K562 (cell line): ENCODE measurements at regions of chr2 and their contacts with region 1.

Region 1: GRCh38 chr2:62456721-62457539 is 49.1 kb downstream of the TMEM17 start:
- DNase-seq: peak; percentile 68 to 87 (median 84)
- ATAC-seq: peak; percentile 98
- H3K4me3 ChIP-seq: peak overlapping the region; percentile 46
- H3K27ac ChIP-seq: no peak overlapping the region
- H3K4me1 ChIP-seq: peaks cover 4 to 12% of the 10 kb centered on the region in 2 experiments; a peak in 3 of 5 replicates
- H3K27me3 ChIP-seq: peaks cover 0 to 10% of the 10 kb centered on the region in 2 experiments; a peak in 3 of 5 replicates
- CTCF ChIP-seq: peak; percentile 87 to 93 (median 88)
- EP300 ChIP-seq: no peak
- POLR2A ChIP-seq: no peak
- RAD21 ChIP-seq: peak; percentile 98 to 100

Region 2: DNA sequence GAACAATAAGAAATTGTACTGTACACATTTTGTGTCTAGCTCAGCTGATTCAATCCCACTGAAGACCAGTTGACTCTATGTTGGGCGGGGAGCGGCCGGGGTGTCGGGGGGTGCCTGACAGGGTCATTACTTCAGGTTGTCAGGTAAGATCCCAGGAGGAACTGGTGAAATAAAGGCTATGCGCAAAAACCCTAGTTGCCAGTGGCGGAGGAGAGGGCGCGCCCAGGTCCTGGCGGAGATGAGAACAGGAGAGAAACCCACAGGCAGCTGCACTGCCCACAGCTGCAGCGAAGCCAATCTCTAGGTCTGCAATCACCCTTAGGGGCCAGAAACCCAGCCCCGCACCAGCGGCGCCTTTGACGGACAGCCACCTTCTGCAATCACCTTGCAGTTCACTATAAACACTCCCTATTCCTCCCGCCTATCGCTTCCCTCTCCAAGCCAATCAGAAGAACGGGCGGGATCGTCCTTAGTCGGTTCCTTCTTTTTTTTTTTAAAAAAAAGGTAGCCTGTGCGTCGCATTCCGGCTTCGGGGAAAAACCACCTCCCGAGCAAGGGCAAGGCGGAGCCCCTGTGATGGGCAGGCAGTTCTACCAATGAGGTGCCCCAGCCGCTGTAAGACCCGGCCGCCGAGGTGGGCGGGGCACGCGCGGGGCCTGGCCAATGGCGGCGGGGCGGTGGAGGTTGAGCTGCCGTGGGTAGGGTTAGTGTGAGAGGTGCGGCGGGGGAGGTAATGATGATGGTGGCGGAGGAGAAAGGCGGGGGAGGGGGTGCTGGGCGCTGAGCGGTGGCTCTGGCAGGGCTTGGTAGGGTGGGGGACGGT is 248.3 kb after region 1 on chr2 and contains the start of gene EHBP1:
- CTCF ChIA-PET with region 1: no interaction called
- POLR2A ChIA-PET with region 1: interaction called, 6 read pairs
- in situ Hi-C with region 1: no loop called
- intact Hi-C with region 1: loop called (anchors 5 kb)
- DNase-seq: peak; percentile 99 to 100 (median 100)
- ATAC-seq: peak; percentile 96
- H3K4me3 ChIP-seq: peak within 1 kb of the TSS; percentile 57
- H3K27ac ChIP-seq: peak within 1 kb of the TSS; percentile 69
- H3K4me1 ChIP-seq: peaks cover 0 to 20% of the 10 kb centered on the region in 2 experiments; a peak in 2 of 5 replicates
- H3K27me3 ChIP-seq: no peaks in the 10 kb centered on the region
- CTCF ChIP-seq: no peak
- EP300 ChIP-seq: peak; percentile 7; the same call in 1 of the 2 replicates
- POLR2A ChIP-seq: peak; percentile 81
- RAD21 ChIP-seq: 0 out of 4 replicates have a peak, but pooled peaks of 1 of the 2 experiments have one; percentile 11
- polyA plus RNA-seq, gene EHBP1: 8.9 to 9.6 TPM

Region 3: GRCh38 chr2:62724886-62725711 is 268.2 kb after region 1 on chr2:
- CTCF ChIA-PET with region 1: interaction called, 4 read pairs
- POLR2A ChIA-PET with region 1: no interaction called
- in situ Hi-C with region 1: no loop called
- intact Hi-C with region 1: loop called (anchors 5 kb)
- DNase-seq: peak; percentile 11 to 33 (median 18)
- ATAC-seq: peak; percentile 88
- H3K4me3 ChIP-seq: no peak overlapping the region
- H3K27ac ChIP-seq: no peak overlapping the region
- H3K4me1 ChIP-seq: peaks cover 0 to 5% of the 10 kb centered on the region in 2 experiments; a peak in 3 of 5 replicates
- H3K27me3 ChIP-seq: no peaks in the 10 kb centered on the region
- CTCF ChIP-seq: peak; percentile 57 to 65 (median 58)
- EP300 ChIP-seq: no peak
- POLR2A ChIP-seq: no peak
- RAD21 ChIP-seq: peak; percentile 36 to 60

Region 4: GRCh38 chr2:62774555-62775366 is 317.8 kb after region 1 on chr2:
- CTCF ChIA-PET with region 1: interaction called, 28 read pairs
- POLR2A ChIA-PET with region 1: interaction called, 4 read pairs
- in situ Hi-C with region 1: loop called (anchors 5 kb)
- intact Hi-C with region 1: loop called (anchors 1 kb)
- DNase-seq: peak; percentile 18 to 63 (median 22)
- ATAC-seq: peak; percentile 96
- H3K4me3 ChIP-seq: no peak overlapping the region
- H3K27ac ChIP-seq: peak overlapping the region; percentile 19; the same call in 1 of the 3 replicates
- H3K4me1 ChIP-seq: peaks cover 0 to 3% of the 10 kb centered on the region in 2 experiments; a peak in 1 of 5 replicates
- H3K27me3 ChIP-seq: no peaks in the 10 kb centered on the region
- CTCF ChIP-seq: peak; percentile 41 to 76 (median 49); a peak in 3 of 6 replicates
- EP300 ChIP-seq: no peak
- POLR2A ChIP-seq: no peak
- RAD21 ChIP-seq: peak; percentile 86 to 93

Region 5: GRCh38 chr2:62939735-62940491 is 483.0 kb after region 1 on chr2:
- CTCF ChIA-PET with region 1: no interaction called
- POLR2A ChIA-PET with region 1: no interaction called
- in situ Hi-C with region 1: no loop called
- intact Hi-C with region 1: loop called (anchors 10 kb)
- DNase-seq: no peak
- ATAC-seq: no peak
- H3K4me3 ChIP-seq: no peak overlapping the region
- H3K27ac ChIP-seq: no peak overlapping the region
- H3K4me1 ChIP-seq: no peaks in the 10 kb centered on the region
- H3K27me3 ChIP-seq: no peaks in the 10 kb centered on the region
- CTCF ChIP-seq: no peak
- EP300 ChIP-seq: no peak
- POLR2A ChIP-seq: no peak
- RAD21 ChIP-seq: no peak

Region 6: GRCh38 chr2:63189026-63189425 is 732.1 kb after region 1 on chr2:
- CTCF ChIA-PET with region 1: interaction called, 4 read pairs
- POLR2A ChIA-PET with region 1: no interaction called
- in situ Hi-C with region 1: loop called (anchors 10 kb)
- intact Hi-C with region 1: loop called (anchors 2 kb)
- DNase-seq: peak; percentile 20 to 65 (median 44)
- ATAC-seq: peak; percentile 98
- H3K4me3 ChIP-seq: no peak overlapping the region
- H3K27ac ChIP-seq: no peak overlapping the region
- H3K4me1 ChIP-seq: no peaks in the 10 kb centered on the region
- H3K27me3 ChIP-seq: peaks cover 0 to 4% of the 10 kb centered on the region in 2 experiments; a peak in 1 of 5 replicates
- CTCF ChIP-seq: peak; percentile 78 to 84 (median 81)
- EP300 ChIP-seq: no peak
- POLR2A ChIP-seq: no peak
- RAD21 ChIP-seq: peak; percentile 13 to 77; a peak in 2 of 4 replicates

Region 7: GRCh38 chr2:63300835-63301234 is 843.9 kb after region 1 on chr2:
- CTCF ChIA-PET with region 1: interaction called, 3 read pairs
- POLR2A ChIA-PET with region 1: no interaction called
- in situ Hi-C with region 1: no loop called
- intact Hi-C with region 1: loop called (anchors 5 kb)
- DNase-seq: peak in 3 of 4 experiments; percentile 10 to 53 (median 12)
- ATAC-seq: no peak
- H3K4me3 ChIP-seq: no peak overlapping the region
- H3K27ac ChIP-seq: no peak overlapping the region; the same call in 2 of the 3 replicates
- H3K4me1 ChIP-seq: no peaks in the 10 kb centered on the region
- H3K27me3 ChIP-seq: no peaks in the 10 kb centered on the region
- CTCF ChIP-seq: peak in 2 of 3 experiments; percentile 26 to 29; a peak in 2 of 6 replicates
- EP300 ChIP-seq: no peak
- POLR2A ChIP-seq: no peak
- RAD21 ChIP-seq: peak in 1 of 2 experiments; percentile 52; a peak in 2 of 4 replicates